ENCODE measurements at regions of chr6 and their contacts with region 1.

Region 1: DNA sequence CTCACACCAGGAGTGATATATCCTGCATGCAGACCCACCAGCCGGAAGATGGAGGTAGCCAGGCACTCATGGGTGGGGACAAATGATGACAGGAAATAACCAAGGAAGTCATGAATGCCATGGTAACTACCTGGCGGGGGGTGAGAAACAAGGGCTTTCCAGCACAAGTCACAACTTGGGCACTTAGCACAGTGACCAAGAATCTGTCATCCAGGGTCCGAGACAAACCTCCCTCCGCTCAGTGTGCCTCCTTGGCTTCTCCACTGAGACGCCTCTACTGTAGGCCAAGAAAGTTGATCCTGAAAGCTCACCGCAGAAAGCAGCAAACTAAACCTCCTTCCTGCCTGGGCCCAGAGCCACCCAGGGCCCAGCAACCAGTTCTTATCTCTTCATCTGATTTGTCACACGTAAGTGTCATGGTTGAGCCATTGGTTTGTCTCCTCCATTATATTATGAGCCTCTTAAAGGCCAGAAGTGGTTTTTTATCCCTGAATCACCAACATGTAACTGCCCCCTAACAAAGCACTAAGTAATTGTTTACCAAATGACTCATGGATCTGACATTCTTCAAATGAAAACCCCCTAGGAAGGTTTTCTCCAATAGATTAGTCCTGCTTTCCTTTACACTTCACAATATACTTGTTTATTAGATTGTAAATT is 84.3 kb upstream of the TAB2 start:
- DNase-seq: peak in 2 of 3 donors; percentile 26 to 66
- H3K4me3 ChIP-seq: no peak overlapping the region
- H3K4me3 Mint-ChIP-seq: no peak overlapping the region
- H3K27ac ChIP-seq: peak overlapping the region in 1 of 2 donors; percentile 85
- H3K27ac Mint-ChIP-seq: peak overlapping the region in 5 of 7 donors; percentile 65 to 97 (median 90)
- H3K4me1 ChIP-seq: peaks cover 62 to 64% of the 10 kb centered on the region in 2 donors
- H3K4me1 Mint-ChIP-seq: peaks cover 70% of the 10 kb centered on the region
- H3K27me3 ChIP-seq: no peaks in the 10 kb centered on the region
- H3K27me3 Mint-ChIP-seq: no peaks in the 10 kb centered on the region
- CTCF ChIP-seq: no peak

Region 2: DNA sequence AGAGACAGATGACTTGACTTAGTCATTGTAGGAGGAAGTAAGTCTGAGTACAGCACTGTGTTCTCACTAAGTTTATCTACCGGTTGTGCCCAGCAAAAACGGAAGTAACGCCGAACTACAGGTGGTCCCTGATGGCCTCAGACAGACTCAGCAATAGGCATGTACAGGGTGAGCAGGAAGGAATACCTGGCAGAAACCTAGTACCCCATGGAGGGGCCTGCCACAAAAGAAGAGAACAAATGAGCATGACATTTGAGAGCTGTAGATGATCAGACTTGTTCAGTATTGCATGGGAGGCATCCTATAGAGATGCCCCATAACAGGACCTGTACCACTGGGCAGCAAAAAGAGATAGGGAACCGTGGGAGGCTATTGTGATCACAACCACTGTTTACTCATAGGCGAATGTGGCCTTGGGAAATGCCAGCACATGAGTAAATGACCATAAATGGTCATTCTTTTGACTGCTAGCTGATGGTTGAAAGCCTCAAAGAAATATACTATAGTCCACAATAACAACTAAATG is 22.1 kb before region 1 on chr6:
- intact Hi-C with region 1: loop called in 1 of 2 experiments (anchors 2 kb)
- DNase-seq: peak; percentile 67 to 89 (median 83)
- H3K4me3 ChIP-seq: peak overlapping the region in 1 of 3 experiments; percentile 8
- H3K4me3 Mint-ChIP-seq: peak overlapping the region in 1 of 2 donors; percentile 70
- H3K27ac ChIP-seq: peak overlapping the region in 1 of 2 donors; percentile 89
- H3K27ac Mint-ChIP-seq: peak overlapping the region; percentile 89 to 99 (median 95)
- H3K4me1 ChIP-seq: peaks cover 38 to 46% of the 10 kb centered on the region in 2 donors
- H3K4me1 Mint-ChIP-seq: no peaks in the 10 kb centered on the region
- H3K27me3 ChIP-seq: no peaks in the 10 kb centered on the region
- H3K27me3 Mint-ChIP-seq: no peaks in the 10 kb centered on the region
- CTCF ChIP-seq: no peak

Region 3: DNA sequence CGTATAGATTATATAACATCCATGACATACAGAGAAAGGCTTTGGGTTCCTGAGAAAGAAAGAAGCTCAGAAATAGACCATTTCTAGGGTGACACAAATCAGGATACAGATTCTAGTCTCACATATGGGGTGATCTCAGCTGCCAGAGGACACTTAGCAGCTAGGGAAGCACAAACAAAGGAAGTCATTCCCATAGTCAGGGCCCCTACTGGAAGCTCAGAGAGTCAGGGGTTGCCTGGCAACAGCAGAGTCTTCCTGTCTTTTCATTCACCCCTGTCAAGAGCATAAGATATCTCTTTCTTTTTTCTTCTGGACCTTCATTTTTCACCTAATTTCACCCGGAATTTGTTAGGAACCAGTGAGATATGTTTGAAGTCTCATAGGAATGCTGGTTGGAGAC is 1053.7 kb after region 1 on chr6:
- intact Hi-C with region 1: no loop called
- DNase-seq: no peak
- H3K4me3 ChIP-seq: no peak overlapping the region
- H3K4me3 Mint-ChIP-seq: no peak overlapping the region
- H3K27ac ChIP-seq: no peak overlapping the region
- H3K27ac Mint-ChIP-seq: no peak overlapping the region
- H3K4me1 ChIP-seq: no peaks in the 10 kb centered on the region
- H3K4me1 Mint-ChIP-seq: no peaks in the 10 kb centered on the region
- H3K27me3 ChIP-seq: peaks cover 0 to 5% of the 10 kb centered on the region in 2 donors
- H3K27me3 Mint-ChIP-seq: peaks cover 18 to 38% (median 21%) of the 10 kb centered on the region in 3 donors
- CTCF ChIP-seq: no peak